BJ (cell line): ENCODE measurements at regions of chr18 and their contacts with region 1.

Region 1: DNA sequence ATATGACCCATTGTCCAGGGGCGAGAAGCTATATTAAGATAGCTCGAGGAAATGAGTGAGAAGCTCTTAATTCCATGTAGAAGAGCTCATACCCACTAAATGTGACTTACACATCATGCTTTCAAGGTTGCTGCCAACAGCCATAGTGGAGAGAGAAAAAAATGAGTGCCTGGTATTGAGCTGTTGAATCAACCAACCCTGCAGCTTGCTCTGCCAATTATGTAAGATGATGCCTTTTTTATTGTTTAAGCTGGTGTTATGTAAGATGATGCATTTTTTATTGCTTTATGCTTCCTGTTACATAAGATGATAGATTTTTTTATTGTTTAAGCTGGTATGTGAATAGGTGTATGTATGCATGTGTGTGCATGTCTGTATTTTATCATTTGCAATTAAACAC is 228.2 kb downstream of the CCDC178 start:
- DNase-seq: no peak
- H3K4me3 ChIP-seq: no peak overlapping the region
- H3K27me3 ChIP-seq: no peaks in the 10 kb centered on the region
- CTCF ChIP-seq: no peak

Region 2: GRCh38 chr18:33128581-33128980 is 83.8 kb before region 1 on chr18:
- CTCF ChIA-PET with region 1: no interaction called
- POLR2A ChIA-PET with region 1: no interaction called
- DNase-seq: no peak
- H3K4me3 ChIP-seq: no peak overlapping the region
- H3K27me3 ChIP-seq: no peaks in the 10 kb centered on the region
- CTCF ChIP-seq: no peak

Region 3: GRCh38 chr18:33231474-33232317 is 19.3 kb after region 1 on chr18:
- CTCF ChIA-PET with region 1: interaction called, 15 read pairs
- POLR2A ChIA-PET with region 1: no interaction called
- DNase-seq: peak; percentile 1
- H3K4me3 ChIP-seq: no peak overlapping the region
- H3K27me3 ChIP-seq: no peaks in the 10 kb centered on the region
- CTCF ChIP-seq: peak; percentile 87

Region 4: DNA sequence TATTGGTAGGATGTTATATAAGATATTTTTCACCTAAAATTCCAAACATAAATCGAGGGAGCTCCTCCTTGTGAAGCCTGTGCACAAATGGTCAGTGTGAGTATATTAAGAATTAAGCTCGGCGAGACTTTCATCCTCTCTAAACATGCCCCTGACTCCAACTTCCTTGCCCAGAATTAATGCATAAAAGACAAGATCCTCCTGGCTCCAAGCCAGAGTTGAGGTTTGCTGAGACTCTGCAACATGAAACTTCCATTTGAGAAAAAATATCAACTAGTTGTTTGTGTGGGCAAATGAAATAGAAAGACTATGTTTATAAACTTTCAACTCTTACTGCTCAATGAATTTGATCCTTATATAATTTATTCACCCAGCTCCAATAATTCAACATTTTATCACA is 160.1 kb after region 1 on chr18:
- CTCF ChIA-PET with region 1: no interaction called
- POLR2A ChIA-PET with region 1: no interaction called
- DNase-seq: no peak
- H3K4me3 ChIP-seq: no peak overlapping the region
- H3K27me3 ChIP-seq: no peaks in the 10 kb centered on the region
- CTCF ChIP-seq: no peak